ENCODE measurements at regions of chrX and their contacts with region 1.

Region 1: GRCh38 chrX:1453951-1454785 is 1.5 kb upstream of the ASMTL start:
- DNase-seq: peak; percentile 92
- H3K4me3 ChIP-seq: peak overlapping the region; percentile 31
- H3K27ac ChIP-seq: no peak overlapping the region
- H3K4me1 ChIP-seq: no peaks in the 10 kb centered on the region
- H3K27me3 ChIP-seq: no peaks in the 10 kb centered on the region
- CTCF ChIP-seq: peak; percentile 97

Region 2: DNA sequence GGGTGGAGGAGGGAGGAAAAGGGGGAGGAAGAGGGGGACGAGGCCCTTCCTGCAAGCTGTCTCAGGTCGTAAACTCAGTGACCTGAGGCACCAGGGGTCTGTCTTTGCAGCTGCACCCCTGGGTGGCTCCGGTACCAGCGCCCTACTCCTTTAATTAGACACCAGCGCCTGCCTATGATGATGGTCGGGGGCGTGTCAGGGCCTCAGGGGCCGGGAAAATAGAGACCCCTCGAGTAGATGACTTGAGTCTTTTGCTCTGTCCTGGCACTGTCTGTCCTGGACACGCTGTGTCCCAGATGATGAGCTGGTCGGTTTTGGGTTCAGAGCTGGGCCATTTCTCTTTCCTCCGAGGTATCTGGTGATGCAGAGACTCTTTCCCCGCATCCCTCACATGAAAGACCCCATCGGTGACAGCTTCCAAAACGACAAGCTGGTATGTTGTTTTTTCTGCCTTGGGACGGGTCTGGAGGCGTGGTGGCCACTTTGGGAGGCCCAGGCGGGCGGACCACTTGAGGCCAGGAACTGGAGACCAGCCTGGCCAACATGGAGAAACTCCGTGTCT is 73.4 kb before region 1 on chrX:
- intact Hi-C with region 1: loop called (anchors 5 kb)
- DNase-seq: no peak
- H3K4me3 ChIP-seq: no peak overlapping the region
- H3K27ac ChIP-seq: no peak overlapping the region
- H3K4me1 ChIP-seq: no peaks in the 10 kb centered on the region
- H3K27me3 ChIP-seq: no peaks in the 10 kb centered on the region
- CTCF ChIP-seq: no peak

Region 3: GRCh38 chrX:1591102-1591900 is 137.1 kb after region 1 on chrX and contains the start of gene AKAP17A:
- intact Hi-C with region 1: loop called (anchors 5 kb)
- DNase-seq: peak; percentile 98
- H3K4me3 ChIP-seq: peak within 1 kb of the TSS; percentile 80
- H3K27ac ChIP-seq: peak within 1 kb of the TSS; percentile 37
- H3K4me1 ChIP-seq: peaks cover 7% of the 10 kb centered on the region
- H3K27me3 ChIP-seq: no peaks in the 10 kb centered on the region
- CTCF ChIP-seq: no peak
- total RNA-seq, gene AKAP17A: 42.4 to 44.6 TPM

Region 4: DNA sequence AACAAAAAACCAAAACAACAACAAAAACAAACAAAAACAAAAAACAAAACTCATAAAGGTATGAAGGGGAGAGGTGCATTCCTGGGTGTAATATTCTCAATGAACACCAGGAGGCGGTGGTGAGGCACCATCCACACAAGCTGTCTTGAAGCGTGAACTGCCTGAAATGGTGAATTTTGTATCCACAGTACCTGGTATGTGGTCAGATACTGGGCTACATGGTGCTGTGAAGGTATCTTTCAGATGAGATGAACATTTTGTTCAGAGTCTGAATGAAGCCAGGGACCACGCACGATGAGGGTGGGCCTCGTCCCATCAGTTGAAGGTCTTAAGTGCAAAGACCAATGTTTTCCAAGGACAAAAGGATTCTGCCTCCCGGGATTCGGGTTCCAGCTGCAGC is 219.2 kb after region 1 on chrX:
- intact Hi-C with region 1: no loop called
- DNase-seq: peak; percentile 30
- H3K4me3 ChIP-seq: no peak overlapping the region
- H3K27ac ChIP-seq: no peak overlapping the region
- H3K4me1 ChIP-seq: no peaks in the 10 kb centered on the region
- H3K27me3 ChIP-seq: no peaks in the 10 kb centered on the region
- CTCF ChIP-seq: peak; percentile 72

Region 5: GRCh38 chrX:1754077-1754476 is 299.9 kb after region 1 on chrX:
- intact Hi-C with region 1: no loop called
- DNase-seq: no peak
- H3K4me3 ChIP-seq: no peak overlapping the region
- H3K27ac ChIP-seq: no peak overlapping the region
- H3K4me1 ChIP-seq: no peaks in the 10 kb centered on the region
- H3K27me3 ChIP-seq: no peaks in the 10 kb centered on the region
- CTCF ChIP-seq: no peak

Region 6: GRCh38 chrX:2608638-2609430 is 1154.7 kb after region 1 on chrX:
- intact Hi-C with region 1: loop called (anchors 10 kb)
- DNase-seq: peak; percentile 93
- H3K4me3 ChIP-seq: peak overlapping the region; percentile 84
- H3K27ac ChIP-seq: peak overlapping the region; percentile 65
- H3K4me1 ChIP-seq: peaks cover 3% of the 10 kb centered on the region
- H3K27me3 ChIP-seq: no peaks in the 10 kb centered on the region
- CTCF ChIP-seq: no peak